CD8-positive, alpha-beta T cell (primary cell): ENCODE measurements at regions of chr5 and their contacts with region 1.

Region 1: GRCh38 chr5:170333161-170333910 is 35.8 kb upstream of the LCP2 start:
- DNase-seq: peak in 8 of 9 experiments; percentile 46 to 89 (median 72)
- ATAC-seq: peak; percentile 24
- H3K4me3 ChIP-seq: peak overlapping the region; percentile 17 to 27
- H3K4me3 Mint-ChIP-seq: peak overlapping the region; percentile 75
- H3K27ac ChIP-seq: peak overlapping the region; percentile 18 to 96
- H3K27ac Mint-ChIP-seq: no peak overlapping the region
- H3K4me1 ChIP-seq: peaks cover 95% of the 10 kb centered on the region
- H3K4me1 Mint-ChIP-seq: peaks cover 30% of the 10 kb centered on the region
- H3K27me3 ChIP-seq: no peaks in the 10 kb centered on the region
- H3K27me3 Mint-ChIP-seq: no peaks in the 10 kb centered on the region
- CTCF ChIP-seq: no peak

Region 2: GRCh38 chr5:169583424-169584204 is 749.7 kb before region 1 on chr5 and contains the start of gene SPDL1:
- CTCF ChIA-PET with region 1: no interaction called
- POLR2A ChIA-PET with region 1: no interaction called
- intact Hi-C with region 1: loop called (anchors 5 to 10 kb)
- DNase-seq: peak; percentile 87 to 97 (median 93)
- ATAC-seq: peak; percentile 93
- H3K4me3 ChIP-seq: peak within 1 kb of the TSS; percentile 76 to 89
- H3K4me3 Mint-ChIP-seq: peak within 1 kb of the TSS; percentile 99
- H3K27ac ChIP-seq: peak within 1 kb of the TSS; percentile 65 to 74
- H3K27ac Mint-ChIP-seq: peak within 1 kb of the TSS; percentile 94
- H3K4me1 ChIP-seq: peaks cover 5% of the 10 kb centered on the region
- H3K4me1 Mint-ChIP-seq: peaks cover 21% of the 10 kb centered on the region
- H3K27me3 ChIP-seq: no peaks in the 10 kb centered on the region
- H3K27me3 Mint-ChIP-seq: no peaks in the 10 kb centered on the region
- CTCF ChIP-seq: no peak
- total RNA-seq, gene SPDL1: 5.2 to 6.9 TPM

Region 3: GRCh38 chr5:170262061-170263045 is 71.0 kb before region 1 on chr5:
- CTCF ChIA-PET with region 1: interaction called, 342 read pairs
- POLR2A ChIA-PET with region 1: interaction called, 16 read pairs
- intact Hi-C with region 1: no loop called
- DNase-seq: peak in 6 of 9 experiments; percentile 43 to 87 (median 67)
- ATAC-seq: peak; percentile 77
- H3K4me3 ChIP-seq: peak overlapping the region in 1 of 2 experiments; percentile 11
- H3K4me3 Mint-ChIP-seq: peak overlapping the region; percentile 74
- H3K27ac ChIP-seq: peak overlapping the region; percentile 45 to 62
- H3K27ac Mint-ChIP-seq: peak overlapping the region; percentile 98
- H3K4me1 ChIP-seq: peaks cover 81% of the 10 kb centered on the region
- H3K4me1 Mint-ChIP-seq: peaks cover 96% of the 10 kb centered on the region
- H3K27me3 ChIP-seq: no peaks in the 10 kb centered on the region
- H3K27me3 Mint-ChIP-seq: no peaks in the 10 kb centered on the region
- CTCF ChIP-seq: no peak

Region 4: GRCh38 chr5:170278611-170279452 is 54.5 kb before region 1 on chr5:
- CTCF ChIA-PET with region 1: interaction called, 342 read pairs
- POLR2A ChIA-PET with region 1: interaction called, 33 read pairs
- intact Hi-C with region 1: loop called in 1 of 2 experiments (anchors 1 kb)
- DNase-seq: peak; percentile 76 to 97 (median 88)
- ATAC-seq: peak; percentile 67
- H3K4me3 ChIP-seq: peak overlapping the region; percentile 28 to 40
- H3K4me3 Mint-ChIP-seq: peak overlapping the region; percentile 78
- H3K27ac ChIP-seq: peak overlapping the region; percentile 36 to 76
- H3K27ac Mint-ChIP-seq: peak overlapping the region; percentile 97
- H3K4me1 ChIP-seq: peaks cover 95% of the 10 kb centered on the region
- H3K4me1 Mint-ChIP-seq: peaks cover 97% of the 10 kb centered on the region
- H3K27me3 ChIP-seq: no peaks in the 10 kb centered on the region
- H3K27me3 Mint-ChIP-seq: no peaks in the 10 kb centered on the region
- CTCF ChIP-seq: no peak

Region 5: DNA sequence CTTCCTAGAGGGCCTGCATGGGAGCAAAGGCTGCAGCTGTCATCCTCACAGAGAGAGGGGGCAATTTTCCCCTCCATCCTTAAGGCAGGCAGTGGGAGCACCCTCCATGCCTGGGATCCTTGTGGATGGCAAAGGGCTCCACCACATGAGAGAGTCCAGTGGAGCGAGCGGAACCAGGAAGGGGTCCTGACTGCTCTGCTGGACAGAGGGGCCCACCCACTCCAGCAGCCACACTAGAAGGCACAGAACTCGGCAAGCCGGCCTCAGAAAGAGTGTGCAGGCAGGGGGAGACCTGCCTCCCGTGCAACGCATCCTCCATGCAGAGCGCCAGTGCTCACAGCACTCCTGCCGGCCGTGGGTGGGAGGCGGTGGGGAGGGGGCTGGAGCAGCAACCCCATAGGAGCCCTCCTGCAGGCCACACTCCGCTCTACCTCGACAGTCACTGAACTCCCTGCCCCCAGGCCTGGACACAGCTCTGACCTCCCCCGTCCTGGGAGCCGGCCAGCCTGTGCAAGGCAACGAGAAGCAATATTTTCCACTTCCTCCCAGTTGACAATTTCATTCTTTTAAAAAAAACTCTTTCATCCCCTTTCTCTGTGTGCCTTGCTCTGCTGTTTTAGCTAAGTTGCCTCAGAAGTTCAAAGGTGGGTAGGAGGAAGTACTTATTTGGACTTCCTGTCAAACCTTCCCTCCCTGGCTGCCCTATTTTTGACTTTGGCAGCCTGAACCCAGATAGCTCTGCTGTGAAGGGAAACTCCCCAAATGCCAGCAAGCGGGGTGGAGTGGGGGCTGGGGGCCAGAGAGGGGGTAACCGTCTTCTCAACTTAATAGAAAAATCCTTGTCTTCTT is 30.5 kb before region 1 on chr5:
- CTCF ChIA-PET with region 1: interaction called, 192 read pairs
- POLR2A ChIA-PET with region 1: interaction called, 112 read pairs
- intact Hi-C with region 1: loop called (anchors 1 to 2 kb)
- DNase-seq: peak; percentile 28 to 96 (median 68)
- ATAC-seq: peak; percentile 90
- H3K4me3 ChIP-seq: peak overlapping the region; percentile 42 to 60
- H3K4me3 Mint-ChIP-seq: peak overlapping the region; percentile 86
- H3K27ac ChIP-seq: peak overlapping the region; percentile 46 to 69
- H3K27ac Mint-ChIP-seq: peak overlapping the region; percentile 96
- H3K4me1 ChIP-seq: peaks cover 65% of the 10 kb centered on the region
- H3K4me1 Mint-ChIP-seq: peaks cover 84% of the 10 kb centered on the region
- H3K27me3 ChIP-seq: no peaks in the 10 kb centered on the region
- H3K27me3 Mint-ChIP-seq: no peaks in the 10 kb centered on the region
- CTCF ChIP-seq: peak; percentile 27

Region 6: DNA sequence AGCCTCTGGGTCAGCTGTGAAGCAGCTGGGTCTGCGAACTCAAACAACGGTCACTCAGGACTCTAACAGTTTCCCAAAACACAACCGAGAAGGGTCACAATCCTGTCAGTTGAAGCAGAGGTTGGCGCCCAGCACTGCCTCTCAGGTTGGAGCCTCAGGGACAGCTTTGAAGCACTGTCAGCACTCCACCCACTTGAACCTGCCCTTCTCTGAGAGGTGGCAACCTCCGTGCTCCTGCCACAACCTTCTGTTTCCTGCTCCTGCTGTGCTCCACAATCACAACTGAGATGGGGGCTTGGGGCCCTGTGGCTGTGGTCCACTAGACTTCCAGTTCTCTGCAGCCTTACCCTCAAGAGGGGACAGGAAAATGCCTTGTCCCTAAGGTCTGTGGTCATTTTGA is 14.0 kb before region 1 on chr5:
- CTCF ChIA-PET with region 1: interaction called, 9 read pairs
- POLR2A ChIA-PET with region 1: interaction called, 24 read pairs
- intact Hi-C with region 1: loop called in 1 of 2 experiments (anchors 2 kb)
- DNase-seq: no peak
- ATAC-seq: peak; percentile 58
- H3K4me3 ChIP-seq: no peak overlapping the region
- H3K4me3 Mint-ChIP-seq: no peak overlapping the region
- H3K27ac ChIP-seq: no peak overlapping the region
- H3K27ac Mint-ChIP-seq: peak overlapping the region; percentile 32
- H3K4me1 ChIP-seq: peaks cover 13% of the 10 kb centered on the region
- H3K4me1 Mint-ChIP-seq: peaks cover 42% of the 10 kb centered on the region
- H3K27me3 ChIP-seq: no peaks in the 10 kb centered on the region
- H3K27me3 Mint-ChIP-seq: no peaks in the 10 kb centered on the region
- CTCF ChIP-seq: no peak